ENCODE measurements at regions of chr15 and their contacts with region 1.

Region 1: DNA sequence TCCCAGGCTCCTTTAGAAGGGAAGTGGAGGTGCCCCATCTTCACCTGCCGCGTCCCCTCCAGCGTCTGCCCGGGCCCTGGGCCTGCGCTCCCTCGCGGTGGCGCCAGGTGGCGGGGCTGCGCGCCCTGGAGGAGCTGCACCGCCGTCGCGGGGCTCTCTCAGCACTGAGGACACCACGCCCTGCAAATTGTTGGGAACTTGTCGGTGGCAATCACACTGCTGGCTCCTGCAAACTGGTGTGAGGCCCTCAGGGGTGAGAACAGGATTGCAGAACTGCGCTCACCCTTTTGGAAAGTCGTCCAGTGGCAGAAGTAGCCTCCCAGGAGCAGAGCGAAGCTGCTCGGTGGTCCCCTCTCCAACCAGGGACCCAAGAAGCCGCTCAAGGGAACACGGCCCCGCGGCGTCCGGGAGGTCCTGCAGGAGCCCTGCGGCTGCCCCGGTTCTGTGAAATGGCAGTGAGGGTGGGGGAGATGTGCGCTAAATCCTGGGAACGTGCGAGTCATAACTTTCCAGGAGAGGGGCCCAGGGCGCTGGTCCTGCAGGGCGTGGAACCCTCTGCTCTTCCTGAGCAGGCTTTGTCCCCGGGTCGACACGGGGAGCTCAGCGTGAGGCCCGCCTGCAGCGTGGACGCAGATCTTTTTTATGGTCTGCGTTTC is 995 bp upstream of the LRRK1 start:
- DNase-seq: peak; percentile 83 to 91
- H3K4me3 ChIP-seq: peak overlapping the region; percentile 75 to 87 (median 82)
- H3K27ac ChIP-seq: peak overlapping the region in 4 of 5 donors; percentile 64 to 86 (median 82)
- H3K4me1 ChIP-seq: peaks cover 15 to 38% (median 32%) of the 10 kb centered on the region in 4 donors
- H3K27me3 ChIP-seq: peaks cover 0 to 16% (median 4%) of the 10 kb centered on the region in 3 donors
- CTCF ChIP-seq: peak in 5 of 7 experiments; percentile 70 to 96 (median 92)
- EP300 ChIP-seq: no peak
- POLR2A ChIP-seq: no peak

Region 2: DNA sequence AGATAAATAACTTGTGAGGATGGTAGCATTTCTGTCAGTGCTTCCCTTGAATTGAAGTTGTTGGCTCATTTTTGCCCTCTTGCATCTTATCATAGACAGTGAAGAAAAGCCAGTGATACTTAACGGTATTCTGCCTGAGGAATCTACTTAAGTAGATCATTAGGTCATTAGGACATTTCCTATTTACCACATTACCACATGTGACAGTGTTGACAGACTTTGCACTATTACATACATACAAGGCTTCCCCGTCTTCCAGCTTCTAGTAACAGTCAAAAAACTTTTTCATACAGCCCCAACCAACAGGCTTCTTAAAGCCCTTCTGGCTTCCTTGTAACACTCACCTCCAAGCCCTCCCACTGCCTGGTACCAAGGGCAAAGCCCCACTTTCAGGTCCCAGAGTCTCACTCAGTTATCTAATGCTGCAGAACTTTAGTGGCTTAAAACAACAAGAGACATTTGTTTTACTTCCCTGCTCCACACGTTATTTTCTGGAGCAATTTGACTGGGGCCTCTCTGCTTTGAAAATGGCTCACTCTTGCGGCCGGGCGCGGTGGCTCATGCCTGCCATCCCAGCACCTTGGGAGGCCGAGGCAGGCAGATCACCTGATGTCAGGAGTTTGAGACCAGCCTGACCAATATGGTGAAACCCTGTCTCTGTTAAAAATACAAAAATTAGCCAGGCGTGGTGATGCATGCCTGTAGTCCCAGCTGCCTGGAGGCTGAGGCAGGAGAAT is 275.8 kb before region 1 on chr15:
- intact Hi-C with region 1: no loop called
- DNase-seq: no peak
- H3K4me3 ChIP-seq: no peak overlapping the region
- H3K27ac ChIP-seq: no peak overlapping the region
- H3K4me1 ChIP-seq: peaks cover 0 to 28% (median 8%) of the 10 kb centered on the region in 4 donors
- H3K27me3 ChIP-seq: no peaks in the 10 kb centered on the region
- CTCF ChIP-seq: no peak
- EP300 ChIP-seq: no peak
- POLR2A ChIP-seq: no peak

Region 3: DNA sequence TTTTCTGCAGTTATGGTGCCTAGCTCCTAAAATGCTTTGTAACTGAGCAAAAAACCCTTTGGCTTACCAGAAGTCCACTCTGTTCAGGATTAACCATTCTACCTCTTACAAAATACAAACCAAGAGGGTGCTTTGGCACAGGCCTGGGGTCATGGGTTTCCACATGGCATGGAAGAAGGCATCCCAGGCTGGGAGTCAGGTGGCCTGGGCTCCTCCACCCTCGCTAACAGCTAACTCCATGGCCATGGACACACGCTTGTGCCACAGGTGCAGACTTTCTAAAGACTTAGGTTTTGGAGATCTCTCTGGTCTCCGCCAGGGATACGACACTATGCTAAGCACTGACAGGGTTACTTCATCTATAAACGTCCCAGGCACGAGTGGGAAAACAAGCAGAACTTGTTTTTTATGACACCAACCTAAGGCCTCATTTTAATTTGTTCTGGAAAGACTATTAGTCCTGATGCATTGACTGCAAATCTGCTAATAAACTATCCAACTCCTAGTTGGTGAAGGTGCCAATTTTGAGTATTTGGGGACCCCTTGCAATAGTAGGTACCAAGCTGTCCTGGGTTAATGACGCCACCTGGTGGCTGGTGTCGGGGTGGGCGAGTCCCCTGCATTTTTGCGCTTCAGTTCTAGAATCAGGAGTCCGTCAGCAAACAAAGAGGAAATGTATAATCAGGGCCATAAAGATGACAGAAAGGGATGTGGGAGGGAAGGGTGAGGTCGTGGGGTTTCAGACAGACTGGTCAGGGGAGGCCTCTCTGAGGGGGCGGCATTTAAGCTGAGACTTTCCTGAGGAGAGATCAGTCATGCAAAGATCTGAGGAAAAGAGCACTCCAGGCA is 48.8 kb before region 1 on chr15:
- intact Hi-C with region 1: no loop called
- DNase-seq: no peak
- H3K4me3 ChIP-seq: no peak overlapping the region
- H3K27ac ChIP-seq: no peak overlapping the region
- H3K4me1 ChIP-seq: no peaks in the 10 kb centered on the region
- H3K27me3 ChIP-seq: peaks cover 0 to 12% (median 0%) of the 10 kb centered on the region in 3 donors
- CTCF ChIP-seq: no peak
- EP300 ChIP-seq: no peak
- POLR2A ChIP-seq: no peak

Region 4: GRCh38 chr15:100987143-100987542 is 69.0 kb after region 1 on chr15:
- intact Hi-C with region 1: no loop called
- DNase-seq: no peak
- H3K4me3 ChIP-seq: no peak overlapping the region
- H3K27ac ChIP-seq: no peak overlapping the region
- H3K4me1 ChIP-seq: no peaks in the 10 kb centered on the region
- H3K27me3 ChIP-seq: no peaks in the 10 kb centered on the region
- CTCF ChIP-seq: no peak
- EP300 ChIP-seq: no peak
- POLR2A ChIP-seq: no peak

Region 5: GRCh38 chr15:101008158-101009139 is 90.3 kb after region 1 on chr15:
- intact Hi-C with region 1: loop called (anchors 5 kb)
- DNase-seq: peak; percentile 91 to 93
- H3K4me3 ChIP-seq: peak overlapping the region; percentile 45 to 59 (median 56)
- H3K27ac ChIP-seq: peak overlapping the region; percentile 53 to 62 (median 56)
- H3K4me1 ChIP-seq: peaks cover 12 to 24% (median 18%) of the 10 kb centered on the region in 4 donors
- H3K27me3 ChIP-seq: no peaks in the 10 kb centered on the region
- CTCF ChIP-seq: peak in 5 of 7 experiments; percentile 89 to 98 (median 94)
- EP300 ChIP-seq: no peak
- POLR2A ChIP-seq: no peak

Region 6: GRCh38 chr15:101127506-101128076 is 209.4 kb after region 1 on chr15:
- intact Hi-C with region 1: no loop called
- DNase-seq: peak; percentile 68 to 88
- H3K4me3 ChIP-seq: no peak overlapping the region
- H3K27ac ChIP-seq: peak overlapping the region; percentile 68 to 91 (median 80)
- H3K4me1 ChIP-seq: peaks cover 12 to 29% (median 22%) of the 10 kb centered on the region in 4 donors
- H3K27me3 ChIP-seq: no peaks in the 10 kb centered on the region
- CTCF ChIP-seq: no peak
- EP300 ChIP-seq: no peak
- POLR2A ChIP-seq: no peak